ENCODE measurements at regions of chr2 and their contacts with region 1.

Region 1: DNA sequence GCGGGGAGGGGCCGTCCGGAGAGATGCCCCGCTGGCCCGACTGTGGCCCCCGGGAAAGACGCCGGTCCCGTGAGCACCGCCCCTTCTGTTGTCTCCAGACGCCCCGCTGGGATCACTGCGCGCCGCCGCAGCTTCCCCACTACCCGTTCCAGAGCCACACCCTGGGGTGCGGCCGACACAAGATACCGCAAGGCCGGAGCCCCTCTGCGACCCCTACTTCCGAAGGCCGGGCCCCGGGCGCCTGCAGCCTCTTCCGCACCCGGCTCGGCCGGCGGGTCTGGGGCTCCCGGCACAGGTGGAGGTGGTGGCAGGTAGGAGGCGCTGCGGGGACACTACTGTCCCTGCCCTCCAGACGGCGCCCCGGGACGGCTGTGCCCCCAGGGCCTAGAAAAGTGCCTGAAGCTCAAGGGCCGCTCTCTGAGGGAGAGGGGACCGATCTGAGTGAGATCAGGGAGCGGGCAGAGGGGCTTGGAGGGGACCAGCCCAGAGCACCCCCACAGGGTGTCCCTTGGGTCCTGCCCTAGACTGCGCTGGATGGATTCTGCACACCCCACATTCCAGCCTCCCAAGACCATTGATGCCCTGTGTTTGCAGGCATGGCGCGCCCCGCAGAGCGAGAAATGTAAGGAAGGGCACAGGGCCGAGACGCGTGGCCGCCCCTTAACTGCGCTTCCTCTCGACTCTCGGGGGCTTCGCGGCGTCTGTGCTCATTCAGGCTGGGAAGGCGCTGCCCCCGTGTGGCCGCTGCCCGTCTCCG is 80.0 kb downstream of the GFPT1 start:
- DNase-seq: peak; percentile 76
- H3K4me3 Mint-ChIP-seq: peak overlapping the region; percentile 73
- H3K27ac Mint-ChIP-seq: no peak overlapping the region
- H3K4me1 Mint-ChIP-seq: peaks cover 17% of the 10 kb centered on the region
- H3K27me3 Mint-ChIP-seq: no peaks in the 10 kb centered on the region
- CTCF ChIP-seq: peak; percentile 78

Region 2: DNA sequence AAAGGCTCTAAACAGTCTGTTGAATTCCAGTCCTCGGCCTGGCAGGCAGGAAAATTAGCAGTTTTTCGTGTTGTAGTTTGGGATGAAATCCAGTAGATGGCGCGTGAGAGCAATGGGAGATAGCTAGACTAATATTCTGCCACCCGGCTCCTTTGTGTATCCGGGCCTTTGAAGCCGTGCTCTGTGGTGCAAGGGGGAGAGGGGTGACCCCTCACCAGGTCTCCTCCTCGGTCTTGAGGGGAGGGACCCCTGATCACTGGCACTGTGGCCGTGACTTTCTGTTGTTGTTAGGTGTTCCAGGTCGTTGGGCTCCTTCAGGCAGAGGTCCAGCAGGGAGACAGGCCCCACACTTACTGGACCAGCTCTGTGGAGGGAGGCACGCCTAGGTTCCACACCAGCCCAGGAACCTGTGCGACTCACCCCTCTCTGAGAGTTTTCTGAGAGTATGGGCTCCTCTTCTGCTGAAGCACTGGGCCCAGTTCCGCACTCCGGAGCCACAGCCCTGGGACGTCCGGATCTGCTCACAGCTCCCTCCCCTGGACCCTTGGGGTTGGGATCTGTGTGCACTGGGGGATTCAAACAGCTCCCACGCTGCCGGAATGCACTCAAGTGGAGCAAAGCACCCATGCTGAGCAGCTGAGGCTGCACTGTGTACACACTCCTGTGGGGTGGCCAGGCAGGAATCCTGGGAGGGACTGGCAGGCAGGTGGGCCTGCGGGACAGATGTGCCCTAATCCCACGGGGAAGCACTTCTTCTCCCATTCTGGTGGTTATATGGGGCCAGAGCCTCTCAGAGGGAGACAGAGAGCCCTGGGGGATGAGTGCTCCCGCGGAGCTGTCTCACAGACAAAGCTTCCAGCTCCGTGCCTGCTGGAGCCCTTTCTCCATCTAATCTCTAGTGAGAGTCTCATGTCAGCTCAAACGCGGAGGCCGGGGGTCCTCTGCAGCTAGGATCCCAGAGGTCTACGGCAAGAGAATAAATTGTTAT is 363.1 kb before region 1 on chr2:
- CTCF ChIA-PET with region 1: interaction called, 13 read pairs
- POLR2A ChIA-PET with region 1: no interaction called
- intact Hi-C with region 1: loop called (anchors 1 kb)
- DNase-seq: peak; percentile 79
- H3K4me3 Mint-ChIP-seq: no peak overlapping the region
- H3K27ac Mint-ChIP-seq: no peak overlapping the region
- H3K4me1 Mint-ChIP-seq: no peaks in the 10 kb centered on the region
- H3K27me3 Mint-ChIP-seq: no peaks in the 10 kb centered on the region
- CTCF ChIP-seq: peak; percentile 72

Region 3: DNA sequence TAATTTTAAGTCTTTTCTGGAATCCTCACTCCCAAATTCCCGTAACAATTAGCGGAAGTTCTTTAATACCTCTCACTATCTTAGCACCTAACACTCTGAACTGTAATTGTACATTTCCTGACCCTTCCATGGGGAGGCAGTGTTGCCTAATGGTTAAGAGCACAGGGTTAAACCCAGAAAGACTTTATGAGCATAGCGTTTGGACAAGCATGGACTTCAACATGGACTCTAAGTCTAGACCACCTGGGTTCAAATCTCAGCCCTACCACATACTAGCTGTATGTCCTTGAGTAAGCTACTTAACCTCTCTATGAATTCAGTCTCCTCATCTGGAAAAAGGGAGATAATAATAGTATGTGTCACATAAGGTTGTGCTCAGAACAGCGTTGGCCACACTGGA is 281.0 kb before region 1 on chr2:
- CTCF ChIA-PET with region 1: interaction called, 4 read pairs
- POLR2A ChIA-PET with region 1: no interaction called
- intact Hi-C with region 1: loop called (anchors 1 kb)
- DNase-seq: peak; percentile 75
- H3K4me3 Mint-ChIP-seq: no peak overlapping the region
- H3K27ac Mint-ChIP-seq: no peak overlapping the region
- H3K4me1 Mint-ChIP-seq: peaks cover 5% of the 10 kb centered on the region
- H3K27me3 Mint-ChIP-seq: no peaks in the 10 kb centered on the region
- CTCF ChIP-seq: peak; percentile 59

Region 4: GRCh38 chr2:69159988-69160387 is 147.0 kb before region 1 on chr2:
- CTCF ChIA-PET with region 1: interaction called, 11 read pairs
- POLR2A ChIA-PET with region 1: interaction called, 4 read pairs
- intact Hi-C with region 1: loop called (anchors 1 kb)
- DNase-seq: peak; percentile 91
- H3K4me3 Mint-ChIP-seq: no peak overlapping the region
- H3K27ac Mint-ChIP-seq: peak overlapping the region; percentile 52
- H3K4me1 Mint-ChIP-seq: peaks cover 19% of the 10 kb centered on the region
- H3K27me3 Mint-ChIP-seq: no peaks in the 10 kb centered on the region
- CTCF ChIP-seq: peak; percentile 75

Region 5: GRCh38 chr2:69514406-69514805 is 207.4 kb after region 1 on chr2:
- CTCF ChIA-PET with region 1: no interaction called
- POLR2A ChIA-PET with region 1: no interaction called
- intact Hi-C with region 1: no loop called
- DNase-seq: peak; percentile 4
- H3K4me3 Mint-ChIP-seq: no peak overlapping the region
- H3K27ac Mint-ChIP-seq: no peak overlapping the region
- H3K4me1 Mint-ChIP-seq: no peaks in the 10 kb centered on the region
- H3K27me3 Mint-ChIP-seq: no peaks in the 10 kb centered on the region
- CTCF ChIP-seq: no peak

Measured in MCF 10A (cell line).